ENCODE measurements at regions of chr16 and their contacts with region 1.

Region 1: DNA sequence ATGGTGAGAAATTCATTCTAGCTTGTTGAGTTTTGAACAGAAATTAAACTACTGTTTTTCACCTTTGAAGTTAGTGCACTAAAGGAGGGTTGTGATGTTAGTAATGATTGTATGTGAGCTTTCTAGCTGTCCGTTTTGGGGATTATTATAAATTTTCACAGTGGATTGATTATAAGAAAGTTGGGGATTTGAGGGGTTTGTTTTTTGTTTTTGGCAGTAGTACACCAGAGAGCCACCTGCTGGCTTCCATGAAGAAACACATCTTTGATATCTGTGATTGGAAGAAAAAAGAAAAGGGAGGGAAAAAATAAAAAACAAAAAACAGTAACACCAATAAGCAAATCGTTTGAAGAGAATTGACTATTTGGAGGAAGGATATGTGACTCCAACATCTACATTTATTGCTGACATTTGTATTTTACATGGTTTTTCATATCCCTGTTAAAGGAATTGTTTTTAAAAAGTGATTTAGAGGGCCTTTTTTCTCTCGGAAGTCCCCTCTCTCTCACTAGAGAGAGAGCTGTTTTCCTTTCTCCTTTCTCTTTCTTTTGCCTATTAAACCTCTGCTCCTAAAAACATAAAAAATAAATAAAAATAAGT is 1469.5 kb upstream of the GOT2 start:
- DNase-seq: peak; percentile 5
- H3K27ac ChIP-seq: no peak overlapping the region
- CTCF ChIP-seq: peak; percentile 17; the same call in 1 of the 2 replicates

Region 2: DNA sequence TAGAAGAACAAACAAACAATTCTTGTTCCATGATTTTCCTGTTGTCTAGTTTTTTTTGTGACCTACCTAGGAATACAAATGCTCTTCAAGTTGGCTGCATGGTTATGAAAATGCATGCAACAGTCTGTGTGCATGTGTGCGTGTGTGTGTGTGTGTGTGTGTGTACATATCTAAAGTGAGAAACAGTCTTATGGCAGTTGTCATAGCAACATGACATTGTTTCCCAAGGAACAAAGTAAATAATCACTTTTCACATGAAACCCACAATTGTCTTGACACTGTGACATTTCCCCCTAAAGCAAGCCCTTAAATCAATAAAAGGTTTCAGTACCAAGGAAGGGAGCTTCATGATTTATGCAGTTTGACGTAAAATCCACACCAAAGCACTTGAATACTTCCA is 1074.2 kb after region 1 on chr16:
- CTCF ChIA-PET with region 1: interaction called, 12 read pairs
- POLR2A ChIA-PET with region 1: no interaction called
- DNase-seq: no peak
- H3K27ac ChIP-seq: no peak overlapping the region
- CTCF ChIP-seq: no peak

Region 3: GRCh38 chr16:61403386-61403785 is 1199.8 kb after region 1 on chr16:
- CTCF ChIA-PET with region 1: interaction called, 10 read pairs
- POLR2A ChIA-PET with region 1: no interaction called
- DNase-seq: no peak
- H3K27ac ChIP-seq: no peak overlapping the region
- CTCF ChIP-seq: no peak